Activated naive CD8-positive, alpha-beta T cell treated with anti-CD3 and anti-CD28 coated beads, Interleukin-2, amount 10 ng/mL, durations not matched to agents 7 days and 5 days (primary cell): ENCODE measurements at regions of chr4 and their contacts with region 1.

Region 1: GRCh38 chr4:118850488-118851173 is 14.7 kb upstream of the SEC24D start:
- DNase-seq: no peak
- ATAC-seq: peak; percentile 98
- H3K4me3 Mint-ChIP-seq: peak overlapping the region; percentile 89
- H3K27ac Mint-ChIP-seq: peak overlapping the region; percentile 93
- H3K4me1 Mint-ChIP-seq: peaks cover 21% of the 10 kb centered on the region
- H3K27me3 Mint-ChIP-seq: peaks cover 4% of the 10 kb centered on the region

Region 2: DNA sequence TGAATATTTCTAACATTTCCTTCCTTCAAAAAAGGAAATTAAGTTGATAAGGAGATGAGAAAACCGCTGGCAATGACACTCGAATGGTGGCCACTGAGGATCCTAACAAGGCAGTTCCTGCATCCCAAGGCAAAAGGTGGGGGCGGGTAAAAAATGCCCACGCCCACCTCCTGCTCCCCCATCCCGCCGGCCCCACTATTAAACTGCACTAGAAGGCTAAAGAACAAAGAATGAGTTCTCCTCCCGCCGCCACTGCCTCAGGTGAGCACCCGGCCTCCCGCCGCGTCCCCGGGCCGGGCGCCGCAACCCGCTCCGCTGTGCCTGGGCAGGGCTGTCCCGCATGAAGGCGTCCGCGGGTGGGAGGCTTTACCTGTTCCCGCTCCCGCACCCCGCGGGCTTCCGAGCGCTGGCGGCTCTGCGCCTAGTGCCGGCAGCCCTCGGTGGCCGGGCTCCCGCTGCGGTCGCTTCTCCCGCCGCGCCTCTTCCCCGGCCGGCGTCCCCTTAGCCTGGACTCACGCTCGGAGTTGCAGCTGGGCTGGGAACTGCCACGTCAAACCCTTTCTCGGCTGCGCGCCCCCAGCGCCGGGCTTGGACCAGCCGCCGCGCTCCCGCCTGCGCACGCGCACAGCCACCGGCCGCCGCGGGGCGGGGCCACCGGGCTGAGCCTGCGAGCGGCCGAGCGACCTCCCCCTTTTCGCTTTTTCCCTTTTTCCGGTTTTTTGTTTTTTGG is 14.9 kb before region 1 on chr4 and contains the start of gene SEC24D:
- POLR2A ChIA-PET with region 1: interaction called, 13 read pairs
- DNase-seq: peak; percentile 95
- ATAC-seq: peak; percentile 85
- H3K4me3 Mint-ChIP-seq: peak within 1 kb of the TSS; percentile 100
- H3K27ac Mint-ChIP-seq: peak within 1 kb of the TSS; percentile 98
- H3K4me1 Mint-ChIP-seq: peaks cover 22% of the 10 kb centered on the region
- H3K27me3 Mint-ChIP-seq: peaks cover 8% of the 10 kb centered on the region
- total RNA-seq, gene SEC24D: 26.2 to 28.4 TPM